ENCODE measurements at regions of chr1 and their contacts with region 1.

Region 1: GRCh38 chr1:21189906-21190500 is 13.3 kb upstream of the EIF4G3 start:
- DNase-seq: no peak
- ATAC-seq: no peak
- H3K4me3 ChIP-seq: no peak overlapping the region
- H3K27ac ChIP-seq: no peak overlapping the region
- H3K4me1 ChIP-seq: peaks cover 16% of the 10 kb centered on the region
- H3K27me3 ChIP-seq: no peaks in the 10 kb centered on the region
- CTCF ChIP-seq: no peak

Region 2: GRCh38 chr1:20903437-20903836 is 286.6 kb before region 1 on chr1:
- intact Hi-C with region 1: no loop called
- DNase-seq: no peak
- ATAC-seq: no peak
- H3K4me3 ChIP-seq: no peak overlapping the region
- H3K27ac ChIP-seq: no peak overlapping the region
- H3K4me1 ChIP-seq: peaks cover 21% of the 10 kb centered on the region
- H3K27me3 ChIP-seq: no peaks in the 10 kb centered on the region
- CTCF ChIP-seq: no peak

Region 3: GRCh38 chr1:20981915-20982314 is 208.1 kb before region 1 on chr1:
- intact Hi-C with region 1: loop called (anchors 5 kb)
- DNase-seq: no peak
- ATAC-seq: no peak
- H3K4me3 ChIP-seq: no peak overlapping the region
- H3K27ac ChIP-seq: no peak overlapping the region
- H3K4me1 ChIP-seq: peaks cover 18% of the 10 kb centered on the region
- H3K27me3 ChIP-seq: no peaks in the 10 kb centered on the region
- CTCF ChIP-seq: no peak